Heart right ventricle (tissue), 16 donors: ENCODE measurements at regions of chr5 and their contacts with region 1.

Region 1: GRCh38 chr5:38607396-38607795 is 51.0 kb upstream of the LIFR start:
- DNase-seq: no peak
- ATAC-seq: peak in 2 of 8 donors; percentile 33 to 51
- H3K4me3 ChIP-seq: no peak overlapping the region
- H3K27ac ChIP-seq: no peak overlapping the region
- H3K4me1 ChIP-seq: peaks cover 0 to 20% (median 4%) of the 10 kb centered on the region in 9 donors
- H3K27me3 ChIP-seq: no peaks in the 10 kb centered on the region
- CTCF ChIP-seq: no peak

Region 2: GRCh38 chr5:37889612-37890317 is 717.6 kb before region 1 on chr5:
- intact Hi-C with region 1: loop called in 1 of 10 experiments (anchors 5 kb)
- DNase-seq: no peak
- ATAC-seq: no peak
- H3K4me3 ChIP-seq: no peak overlapping the region
- H3K27ac ChIP-seq: no peak overlapping the region
- H3K4me1 ChIP-seq: peaks cover 0 to 9% (median 0%) of the 10 kb centered on the region in 9 donors
- H3K27me3 ChIP-seq: peaks cover 0 to 12% (median 0%) of the 10 kb centered on the region in 7 donors
- CTCF ChIP-seq: no peak

Region 3: GRCh38 chr5:38527475-38527874 is 79.9 kb before region 1 on chr5:
- intact Hi-C with region 1: no loop called
- DNase-seq: no peak
- ATAC-seq: no peak
- H3K4me3 ChIP-seq: no peak overlapping the region
- H3K27ac ChIP-seq: no peak overlapping the region
- H3K4me1 ChIP-seq: peaks cover 3 to 46% (median 30%) of the 10 kb centered on the region in 9 donors
- H3K27me3 ChIP-seq: peaks cover 0 to 3% (median 0%) of the 10 kb centered on the region in 7 donors
- CTCF ChIP-seq: no peak

Region 4: GRCh38 chr5:38556599-38557305 is 50.6 kb before region 1 on chr5 and contains the start of gene LIFR:
- intact Hi-C with region 1: no loop called
- DNase-seq: peak; percentile 84 to 88
- ATAC-seq: peak; percentile 90 to 93 (median 92)
- H3K4me3 ChIP-seq: peak within 1 kb of the TSS; percentile 67 to 97 (median 83)
- H3K27ac ChIP-seq: peak within 1 kb of the TSS; percentile 93 to 100 (median 98)
- H3K4me1 ChIP-seq: peaks cover 0 to 64% (median 32%) of the 10 kb centered on the region in 9 donors
- H3K27me3 ChIP-seq: peaks cover 0 to 64% (median 0%) of the 10 kb centered on the region in 7 donors
- CTCF ChIP-seq: peak in 1 of 9 donors; percentile 4
- total RNA-seq, gene LIFR: 34.7 to 58.8 (median 46.0) TPM